GM23248 (cell line): ENCODE measurements at regions of chr6 and their contacts with region 1.

Region 1: DNA sequence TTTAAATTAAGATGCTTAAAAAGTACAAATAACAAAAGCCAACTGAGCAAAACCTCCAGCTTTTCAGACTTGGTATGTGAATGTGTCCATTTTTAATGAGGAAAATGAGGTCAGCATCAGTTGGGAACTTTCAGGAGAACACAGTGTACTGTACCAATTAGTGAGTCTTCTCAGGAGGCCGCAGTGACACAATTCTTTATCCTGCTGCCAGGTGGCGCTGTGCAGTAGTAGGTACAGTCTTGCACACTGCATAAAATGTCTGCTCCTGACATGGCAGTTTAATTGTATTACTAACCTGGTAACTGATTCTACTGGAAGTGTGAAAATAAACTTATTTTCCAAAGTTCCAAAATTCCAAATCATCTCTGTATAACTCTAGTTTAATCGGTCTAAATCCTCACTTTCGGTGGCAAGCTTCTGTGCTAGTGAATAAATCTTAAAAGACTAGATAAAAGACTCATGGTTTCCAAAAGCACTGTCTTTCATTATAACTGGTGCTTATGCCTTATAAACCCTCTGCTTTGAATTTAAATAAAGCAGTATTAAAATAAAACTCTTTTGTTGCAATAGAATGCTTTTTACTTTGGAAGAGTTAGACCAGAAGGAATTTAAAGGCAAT is 214.8 kb upstream of the MMS22L start:
- DNase-seq: peak; percentile 82
- H3K4me3 ChIP-seq: no peak overlapping the region
- H3K27ac ChIP-seq: no peak overlapping the region
- H3K4me1 ChIP-seq: no peaks in the 10 kb centered on the region
- H3K27me3 ChIP-seq: peaks cover 10% of the 10 kb centered on the region; the same call in 1 of the 2 replicates

Region 2: DNA sequence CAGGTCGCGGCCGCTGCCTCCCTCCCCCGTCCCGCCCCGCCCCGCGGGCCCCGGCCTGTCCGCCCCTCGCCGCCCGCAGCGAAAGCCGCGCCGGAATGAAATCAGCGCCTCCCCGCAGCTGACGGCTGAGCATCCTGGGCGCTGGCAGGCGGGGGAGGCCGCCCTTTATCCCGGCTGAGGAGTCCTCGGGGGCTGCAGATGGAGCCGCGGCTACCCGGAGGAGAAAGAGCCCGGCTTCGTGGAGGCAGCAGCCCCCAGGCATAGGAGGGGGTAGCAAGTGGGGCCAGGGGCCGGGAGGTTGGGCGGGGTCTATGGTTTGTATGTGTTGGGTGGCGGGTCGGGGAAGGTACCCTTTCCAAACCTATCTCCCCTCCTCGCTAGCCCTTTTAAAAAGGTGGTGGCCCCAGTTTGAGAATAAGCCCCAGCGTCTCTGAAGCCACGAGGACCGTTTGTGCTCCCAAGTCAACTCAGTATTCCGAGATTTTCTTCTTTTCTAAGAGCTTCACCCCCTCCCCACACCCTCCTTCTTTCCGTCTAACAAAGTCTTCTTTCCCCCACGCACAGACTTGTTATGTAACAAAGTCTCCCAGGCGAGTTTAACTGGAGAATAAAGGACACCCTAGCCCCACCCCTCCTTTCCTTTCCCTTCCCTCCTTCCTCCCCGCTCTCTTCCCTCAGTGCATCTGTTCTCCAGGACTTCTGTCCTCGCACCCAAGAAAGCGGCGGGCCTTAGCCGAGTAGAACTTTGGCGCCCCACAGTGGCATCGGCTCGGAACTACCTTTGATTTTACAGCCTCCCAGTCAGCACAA is 1347.6 kb after region 1 on chr6:
- in situ Hi-C with region 1: loop called (anchors 25 kb)
- DNase-seq: peak; percentile 90
- H3K4me3 ChIP-seq: peak overlapping the region; percentile 67
- H3K27ac ChIP-seq: no peak overlapping the region
- H3K4me1 ChIP-seq: no peaks in the 10 kb centered on the region
- H3K27me3 ChIP-seq: peaks cover 43% of the 10 kb centered on the region